H1 (cell line): ENCODE measurements at regions of chr14 and their contacts with region 1.

Region 1: GRCh38 chr14:74612350-74613021 is 449 bp upstream of the LTBP2 start:
- DNase-seq: peak; percentile 51 to 93
- H3K4me3 ChIP-seq: peak overlapping the region; percentile 38 to 70 (median 56)
- H3K27ac ChIP-seq: no peak overlapping the region
- H3K4me1 ChIP-seq: peaks cover 4 to 10% (median 6%) of the 10 kb centered on the region in 4 experiments; a peak in 6 of 7 replicates
- H3K27me3 ChIP-seq: peaks cover 28 to 35% (median 32%) of the 10 kb centered on the region in 4 experiments
- CTCF ChIP-seq: peak; percentile 78 to 99 (median 86)
- EP300 ChIP-seq: no peak; a peak in 1 of 3 replicates
- POLR2A ChIP-seq: no peak
- RAD21 ChIP-seq: peak; percentile 21 to 55; a peak in 3 of 4 replicates

Region 2: DNA sequence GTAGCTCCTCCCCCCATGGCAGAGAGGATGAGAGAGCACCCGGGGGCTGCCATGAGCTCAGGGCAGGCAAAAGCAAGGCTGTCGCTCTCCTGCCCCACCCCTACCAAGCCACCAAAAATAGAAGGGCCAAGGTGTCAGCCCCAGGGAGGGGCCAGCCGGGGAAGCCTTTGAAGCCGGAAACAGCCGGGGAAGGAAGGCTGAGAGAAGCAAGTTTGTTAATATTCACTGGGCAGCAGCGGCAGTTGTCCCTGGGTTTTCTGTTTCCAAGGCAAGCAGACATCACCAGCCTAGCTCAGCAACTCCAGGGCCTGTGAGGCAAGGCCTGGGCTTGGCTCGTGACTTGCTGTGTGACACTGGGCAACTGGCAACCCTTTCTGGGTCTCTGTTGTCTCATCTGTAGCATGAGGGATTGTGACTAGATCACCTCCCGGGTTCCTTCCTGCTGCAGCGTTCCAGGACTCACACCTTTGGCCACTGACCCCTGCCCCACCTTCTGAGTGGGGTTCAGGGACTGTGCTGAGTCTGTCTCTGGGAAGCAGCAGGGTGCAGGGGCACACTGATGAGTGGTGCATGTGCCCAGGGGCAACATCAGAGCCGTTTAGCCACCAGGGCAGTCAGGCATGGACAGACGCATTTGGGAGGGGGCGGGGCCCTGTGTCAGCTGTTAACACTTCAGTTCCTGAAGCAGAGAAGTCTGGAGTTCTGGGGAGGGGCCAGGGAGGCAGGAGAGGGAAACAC is 210.8 kb before region 1 on chr14:
- CTCF ChIA-PET with region 1: no interaction called
- POLR2A ChIA-PET with region 1: no interaction called
- DNase-seq: peak in 1 of 2 experiments; percentile 76
- H3K4me3 ChIP-seq: no peak overlapping the region
- H3K27ac ChIP-seq: no peak overlapping the region
- H3K4me1 ChIP-seq: peaks cover 3 to 34% (median 25%) of the 10 kb centered on the region in 4 experiments
- H3K27me3 ChIP-seq: no peaks in the 10 kb centered on the region
- CTCF ChIP-seq: no peak
- EP300 ChIP-seq: no peak
- POLR2A ChIP-seq: no peak
- RAD21 ChIP-seq: no peak

Region 3: DNA sequence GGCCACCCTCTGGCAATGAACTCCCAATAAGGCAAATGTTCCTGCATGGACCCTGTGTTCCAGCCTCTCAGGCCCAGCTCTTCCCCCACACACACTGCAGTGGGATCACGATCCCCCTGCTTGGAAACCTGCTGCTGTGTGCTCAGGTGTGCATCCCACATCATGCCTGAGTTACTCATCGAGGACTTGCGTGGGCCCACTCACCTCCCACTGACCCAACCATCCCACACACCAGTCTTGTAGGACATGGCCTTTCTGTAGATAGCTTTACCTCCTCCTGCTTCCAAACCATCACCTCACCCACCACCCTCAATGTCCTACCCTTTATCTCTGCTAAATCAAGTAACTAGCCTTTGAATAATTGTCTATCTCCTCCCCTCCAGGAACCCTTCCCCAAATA is 144.0 kb before region 1 on chr14:
- CTCF ChIA-PET with region 1: no interaction called
- POLR2A ChIA-PET with region 1: no interaction called
- DNase-seq: peak in 1 of 2 experiments; percentile 27
- H3K4me3 ChIP-seq: no peak overlapping the region
- H3K27ac ChIP-seq: no peak overlapping the region
- H3K4me1 ChIP-seq: no peaks in the 10 kb centered on the region
- H3K27me3 ChIP-seq: no peaks in the 10 kb centered on the region
- CTCF ChIP-seq: no peak
- EP300 ChIP-seq: no peak
- POLR2A ChIP-seq: no peak
- RAD21 ChIP-seq: no peak

Region 4: DNA sequence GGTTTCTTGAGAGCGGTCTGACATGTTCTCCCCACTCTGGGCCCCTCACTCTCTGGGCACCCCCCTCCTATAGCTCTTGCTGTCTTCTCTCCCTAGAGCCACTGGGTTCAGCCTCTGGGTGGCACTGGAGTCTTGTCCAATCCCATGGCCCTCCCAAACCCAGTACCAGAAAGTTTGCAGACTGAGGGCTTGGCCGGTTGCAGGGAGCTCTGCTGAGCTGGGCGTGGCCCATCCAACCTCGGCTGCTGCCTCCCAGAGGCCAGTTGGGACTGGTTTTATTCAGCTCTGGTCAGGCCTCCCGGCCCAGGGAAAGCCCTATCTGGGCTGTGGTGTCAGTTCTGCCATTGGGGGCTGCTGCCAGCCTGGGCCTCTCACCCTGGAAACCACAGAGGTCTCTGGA is 81.0 kb before region 1 on chr14:
- CTCF ChIA-PET with region 1: interaction called, 10 read pairs
- POLR2A ChIA-PET with region 1: no interaction called
- DNase-seq: peak; percentile 23 to 72
- H3K4me3 ChIP-seq: no peak overlapping the region
- H3K27ac ChIP-seq: no peak overlapping the region
- H3K4me1 ChIP-seq: no peaks in the 10 kb centered on the region; a peak in 2 of 7 replicates
- H3K27me3 ChIP-seq: no peaks in the 10 kb centered on the region
- CTCF ChIP-seq: peak; percentile 22 to 60 (median 50)
- EP300 ChIP-seq: no peak
- POLR2A ChIP-seq: no peak
- RAD21 ChIP-seq: peak; percentile 63 to 81

Region 5: GRCh38 chr14:74566174-74567125 is 46.0 kb before region 1 on chr14:
- CTCF ChIA-PET with region 1: interaction called, 30 read pairs
- POLR2A ChIA-PET with region 1: no interaction called
- DNase-seq: no peak
- H3K4me3 ChIP-seq: no peak overlapping the region
- H3K27ac ChIP-seq: no peak overlapping the region
- H3K4me1 ChIP-seq: peaks cover 0 to 12% (median 3%) of the 10 kb centered on the region in 4 experiments; a peak in 5 of 7 replicates
- H3K27me3 ChIP-seq: no peaks in the 10 kb centered on the region
- CTCF ChIP-seq: no peak
- EP300 ChIP-seq: no peak
- POLR2A ChIP-seq: no peak
- RAD21 ChIP-seq: no peak

Region 6: DNA sequence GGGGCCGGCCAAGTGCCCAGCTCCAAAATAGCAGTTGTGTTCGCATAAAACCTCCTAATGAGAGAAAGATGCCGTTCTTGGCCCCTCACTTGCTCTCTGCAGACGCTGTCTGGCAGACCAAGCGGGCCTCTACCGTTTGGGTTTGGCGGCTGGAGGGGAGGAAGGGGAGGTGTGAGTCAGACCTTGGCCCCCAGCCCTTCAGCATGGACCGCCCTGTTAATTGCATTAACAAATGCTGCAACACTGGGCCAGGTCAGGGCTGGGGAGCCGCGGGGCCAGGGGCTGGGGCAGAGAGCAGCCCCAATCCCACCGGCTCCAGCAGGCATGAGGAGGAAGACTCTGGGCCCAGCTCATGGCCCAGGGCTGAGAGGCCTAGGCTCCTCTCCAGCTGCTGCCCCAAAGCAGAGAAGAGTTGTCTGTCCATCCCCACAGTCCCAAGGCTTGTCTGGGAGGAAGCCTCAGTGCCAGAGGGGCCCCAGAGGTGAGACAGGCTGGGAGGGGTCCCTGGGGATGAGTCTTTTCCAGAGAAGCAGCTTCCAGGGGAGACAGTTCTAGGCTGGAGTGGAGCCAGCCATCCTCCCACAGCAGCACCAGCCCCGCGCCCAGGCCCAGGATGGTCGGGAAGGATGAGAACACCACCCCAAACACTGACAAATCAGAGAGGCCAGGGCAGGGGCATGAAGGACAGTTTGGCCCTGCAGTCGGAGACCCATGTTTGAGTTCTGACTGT is 17.3 kb before region 1 on chr14:
- CTCF ChIA-PET with region 1: interaction called, 176 read pairs
- POLR2A ChIA-PET with region 1: interaction called, 3 read pairs
- DNase-seq: no peak
- H3K4me3 ChIP-seq: no peak overlapping the region
- H3K27ac ChIP-seq: no peak overlapping the region
- H3K4me1 ChIP-seq: no peaks in the 10 kb centered on the region; a peak in 1 of 7 replicates
- H3K27me3 ChIP-seq: no peaks in the 10 kb centered on the region
- CTCF ChIP-seq: no peak
- EP300 ChIP-seq: no peak
- POLR2A ChIP-seq: no peak
- RAD21 ChIP-seq: no peak

Region 7: GRCh38 chr14:74641601-74642391 is 29.3 kb after region 1 on chr14:
- CTCF ChIA-PET with region 1: interaction called, 87 read pairs
- POLR2A ChIA-PET with region 1: interaction called, 5 read pairs
- DNase-seq: no peak
- H3K4me3 ChIP-seq: no peak overlapping the region
- H3K27ac ChIP-seq: no peak overlapping the region
- H3K4me1 ChIP-seq: peaks cover 0 to 3% (median under 1%) of the 10 kb centered on the region in 4 experiments; a peak in 3 of 7 replicates
- H3K27me3 ChIP-seq: no peaks in the 10 kb centered on the region
- CTCF ChIP-seq: no peak
- EP300 ChIP-seq: no peak
- POLR2A ChIP-seq: no peak
- RAD21 ChIP-seq: no peak

Region 8: GRCh38 chr14:74655599-74656389 is 43.3 kb after region 1 on chr14:
- CTCF ChIA-PET with region 1: interaction called, 16 read pairs
- POLR2A ChIA-PET with region 1: interaction called, 7 read pairs
- DNase-seq: no peak
- H3K4me3 ChIP-seq: no peak overlapping the region
- H3K27ac ChIP-seq: no peak overlapping the region
- H3K4me1 ChIP-seq: no peaks in the 10 kb centered on the region
- H3K27me3 ChIP-seq: no peaks in the 10 kb centered on the region
- CTCF ChIP-seq: no peak
- EP300 ChIP-seq: no peak
- POLR2A ChIP-seq: no peak
- RAD21 ChIP-seq: no peak

Region 9: DNA sequence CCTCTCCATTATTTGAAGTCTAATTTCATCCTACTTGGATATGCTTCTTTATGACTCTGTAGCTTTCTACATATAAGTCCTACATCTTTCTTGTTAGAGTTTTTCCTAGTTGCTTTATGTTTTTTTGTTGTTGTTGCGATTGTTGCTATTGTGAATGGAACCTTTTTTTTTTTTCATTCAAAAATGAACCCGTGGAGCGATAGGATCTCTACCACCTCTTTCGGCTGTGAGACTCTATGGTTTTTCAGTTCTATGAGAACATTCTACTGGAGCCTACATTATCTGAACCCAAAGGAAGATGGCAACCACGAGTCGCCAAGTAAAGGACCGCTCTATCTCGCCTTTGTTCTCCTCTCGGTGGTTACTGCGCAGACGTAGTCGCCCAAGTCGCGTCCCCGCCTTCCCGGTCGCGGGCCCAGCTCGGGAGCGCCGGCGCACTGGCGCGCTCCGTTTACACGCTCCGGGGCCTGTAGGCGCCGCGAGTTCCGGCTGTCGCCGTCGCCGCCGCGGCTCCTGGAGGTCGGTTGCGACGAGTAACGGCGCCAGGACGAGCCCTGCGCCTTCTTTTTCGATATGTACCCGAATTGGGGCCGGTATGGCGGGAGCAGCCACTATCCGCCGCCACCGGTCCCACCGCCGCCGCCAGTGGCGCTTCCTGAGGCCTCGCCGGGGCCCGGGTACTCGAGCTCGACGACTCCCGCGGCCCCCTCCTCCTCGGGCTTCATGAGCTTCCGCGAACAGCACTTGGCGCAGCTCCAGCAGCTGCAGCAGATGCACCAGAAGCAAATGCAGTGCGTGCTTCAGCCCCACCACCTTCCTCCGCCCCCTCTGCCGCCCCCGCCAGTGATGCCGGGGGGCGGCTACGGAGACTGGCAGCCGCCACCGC is 150.7 kb after region 1 on chr14 and contains the start of gene YLPM1:
- CTCF ChIA-PET with region 1: interaction called, 11 read pairs
- POLR2A ChIA-PET with region 1: no interaction called
- DNase-seq: peak; percentile 75 to 89
- H3K4me3 ChIP-seq: peak within 1 kb of the TSS; percentile 72 to 92 (median 78)
- H3K27ac ChIP-seq: peak within 1 kb of the TSS; percentile 38; the same call in 1 of the 2 replicates
- H3K4me1 ChIP-seq: peaks cover 0 to 3% (median 0%) of the 10 kb centered on the region in 4 experiments; a peak in 1 of 7 replicates
- H3K27me3 ChIP-seq: no peaks in the 10 kb centered on the region
- CTCF ChIP-seq: peak; percentile 37 to 74 (median 50); a peak in 3 of 4 replicates
- EP300 ChIP-seq: 0 out of 3 replicates have a peak, but pooled peaks of 1 of the 2 experiments have one; percentile 69
- POLR2A ChIP-seq: peak; percentile 87 to 91
- RAD21 ChIP-seq: no peak
- total RNA-seq, gene YLPM1: 69.0 and 71.7 TPM in 2 replicates

Region 10: GRCh38 chr14:74898694-74899093 is 286.2 kb after region 1 on chr14:
- CTCF ChIA-PET with region 1: no interaction called
- POLR2A ChIA-PET with region 1: no interaction called
- DNase-seq: no peak
- H3K4me3 ChIP-seq: no peak overlapping the region
- H3K27ac ChIP-seq: no peak overlapping the region
- H3K4me1 ChIP-seq: no peaks in the 10 kb centered on the region
- H3K27me3 ChIP-seq: no peaks in the 10 kb centered on the region
- CTCF ChIP-seq: no peak
- EP300 ChIP-seq: no peak
- POLR2A ChIP-seq: no peak
- RAD21 ChIP-seq: no peak